Activated CD8-positive, alpha-beta T cell treated with anti-CD3 and anti-CD28 coated beads, Interleukin-2, amount 10 ng/mL, durations not matched to agents 7 days and 5 days (primary cell): ENCODE measurements at regions of chr22 and their contacts with region 1.

Region 1: DNA sequence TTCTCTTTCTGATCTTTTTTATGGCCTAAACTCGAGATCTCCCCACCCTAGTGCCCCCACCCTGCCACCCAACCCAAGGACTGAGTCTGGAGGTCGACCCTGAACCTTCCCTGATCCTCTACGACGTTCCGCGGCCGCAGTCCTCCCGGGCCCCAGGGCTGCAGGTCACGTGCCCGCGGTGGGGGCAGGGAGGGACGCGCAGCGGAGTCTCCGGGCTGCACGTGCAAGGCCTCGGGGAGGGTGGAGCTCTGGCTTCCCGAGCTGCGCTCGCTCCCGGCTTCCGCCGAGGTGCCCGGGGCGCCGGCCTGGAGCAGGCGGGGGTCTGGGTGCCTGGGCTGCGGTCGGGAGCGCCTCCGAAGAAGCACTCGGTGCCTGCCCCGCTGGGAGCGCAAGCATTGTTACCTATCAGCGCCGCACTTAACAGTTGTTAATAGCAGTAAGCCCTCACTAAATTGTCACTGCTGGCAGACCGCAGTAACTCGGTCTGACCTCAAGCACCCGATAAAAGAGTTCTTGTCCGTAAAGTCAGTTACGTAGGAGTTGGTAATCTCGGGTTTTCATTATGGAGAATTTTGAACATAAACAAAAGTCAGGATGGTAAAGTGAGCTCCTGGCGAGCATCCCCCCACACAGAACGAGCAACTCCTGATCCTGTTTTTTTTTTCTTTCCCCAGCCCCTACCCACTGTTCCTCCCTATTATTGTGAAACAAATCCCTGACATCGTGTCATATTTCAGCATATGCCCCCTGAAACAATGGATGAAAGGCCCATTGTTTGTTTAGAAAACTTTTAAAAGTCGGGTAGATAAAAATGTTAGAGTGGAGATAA is 69.7 kb upstream of the EP300 start:
- DNase-seq: peak; percentile 83
- ATAC-seq: peak; percentile 75
- H3K4me3 Mint-ChIP-seq: peak overlapping the region; percentile 71
- H3K27ac Mint-ChIP-seq: peak overlapping the region; percentile 86
- H3K4me1 Mint-ChIP-seq: peaks cover 19% of the 10 kb centered on the region
- H3K27me3 Mint-ChIP-seq: peaks cover 16% of the 10 kb centered on the region

Region 2: GRCh38 chr22:40932396-40932795 is 90.3 kb before region 1 on chr22:
- CTCF ChIA-PET with region 1: no interaction called
- POLR2A ChIA-PET with region 1: no interaction called
- DNase-seq: no peak
- ATAC-seq: no peak
- H3K4me3 Mint-ChIP-seq: no peak overlapping the region
- H3K27ac Mint-ChIP-seq: no peak overlapping the region
- H3K4me1 Mint-ChIP-seq: no peaks in the 10 kb centered on the region
- H3K27me3 Mint-ChIP-seq: no peaks in the 10 kb centered on the region

Region 3: DNA sequence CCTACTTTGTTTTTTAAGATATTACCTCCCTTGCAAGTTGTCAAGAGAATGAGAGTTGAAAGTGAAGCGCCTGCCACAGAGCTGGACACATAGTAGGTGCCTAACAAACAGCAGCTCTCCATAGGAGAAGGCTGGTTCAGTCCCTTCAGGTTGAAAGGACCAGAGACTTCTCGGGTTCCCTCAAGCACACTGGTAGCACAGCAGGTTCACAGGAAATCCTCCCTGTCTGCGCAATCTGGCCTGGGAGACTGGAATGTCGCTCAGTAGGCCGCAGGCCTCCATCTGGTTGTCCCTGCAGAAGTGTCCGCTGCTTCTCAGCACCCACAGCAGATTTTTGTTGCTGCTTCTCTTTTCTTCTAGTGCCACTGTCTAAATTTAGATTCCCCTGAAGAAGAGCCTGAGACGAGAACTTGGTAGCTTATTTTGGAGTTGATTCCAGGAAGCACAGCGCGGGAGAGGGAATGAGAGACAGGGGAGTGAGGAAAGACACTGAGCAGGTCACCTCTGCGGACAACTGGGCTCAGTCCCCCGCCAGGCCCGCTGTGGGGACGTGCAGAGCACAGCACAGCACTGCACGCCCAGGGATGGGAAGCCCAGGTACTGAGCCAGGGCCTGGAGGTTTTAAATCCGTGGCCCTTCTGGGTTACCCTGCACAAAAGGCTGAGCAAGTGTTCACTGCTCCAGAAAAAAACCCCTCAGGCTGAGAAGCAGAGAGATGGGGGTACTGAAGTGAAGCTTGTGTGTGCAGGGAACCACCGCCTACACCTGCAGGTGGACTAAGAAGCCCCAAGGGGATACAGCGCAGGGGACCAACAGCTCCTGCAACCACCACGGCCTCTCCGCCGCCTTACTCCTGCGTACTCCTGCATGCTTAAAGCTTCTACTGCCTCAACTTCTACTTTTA is 40.0 kb before region 1 on chr22:
- CTCF ChIA-PET with region 1: no interaction called
- POLR2A ChIA-PET with region 1: no interaction called
- DNase-seq: no peak
- ATAC-seq: no peak
- H3K4me3 Mint-ChIP-seq: no peak overlapping the region
- H3K27ac Mint-ChIP-seq: no peak overlapping the region
- H3K4me1 Mint-ChIP-seq: no peaks in the 10 kb centered on the region
- H3K27me3 Mint-ChIP-seq: no peaks in the 10 kb centered on the region

Region 4: GRCh38 chr22:41091132-41092022 is 68.7 kb after region 1 on chr22:
- CTCF ChIA-PET with region 1: interaction called, 3 read pairs
- POLR2A ChIA-PET with region 1: interaction called, 20 read pairs
- DNase-seq: peak; percentile 99
- ATAC-seq: peak; percentile 87
- H3K4me3 Mint-ChIP-seq: peak overlapping the region; percentile 97
- H3K27ac Mint-ChIP-seq: peak overlapping the region; percentile 100
- H3K4me1 Mint-ChIP-seq: peaks cover 23% of the 10 kb centered on the region
- H3K27me3 Mint-ChIP-seq: no peaks in the 10 kb centered on the region

Region 5: GRCh38 chr22:41106122-41106968 is 83.7 kb after region 1 on chr22:
- CTCF ChIA-PET with region 1: no interaction called
- POLR2A ChIA-PET with region 1: no interaction called
- DNase-seq: no peak
- ATAC-seq: peak; percentile 35
- H3K4me3 Mint-ChIP-seq: no peak overlapping the region
- H3K27ac Mint-ChIP-seq: peak overlapping the region; percentile 75
- H3K4me1 Mint-ChIP-seq: peaks cover 24% of the 10 kb centered on the region
- H3K27me3 Mint-ChIP-seq: no peaks in the 10 kb centered on the region